Motor neuron (in vitro differentiated cells): ENCODE measurements at regions of chr3 and their contacts with region 1.

Region 1: DNA sequence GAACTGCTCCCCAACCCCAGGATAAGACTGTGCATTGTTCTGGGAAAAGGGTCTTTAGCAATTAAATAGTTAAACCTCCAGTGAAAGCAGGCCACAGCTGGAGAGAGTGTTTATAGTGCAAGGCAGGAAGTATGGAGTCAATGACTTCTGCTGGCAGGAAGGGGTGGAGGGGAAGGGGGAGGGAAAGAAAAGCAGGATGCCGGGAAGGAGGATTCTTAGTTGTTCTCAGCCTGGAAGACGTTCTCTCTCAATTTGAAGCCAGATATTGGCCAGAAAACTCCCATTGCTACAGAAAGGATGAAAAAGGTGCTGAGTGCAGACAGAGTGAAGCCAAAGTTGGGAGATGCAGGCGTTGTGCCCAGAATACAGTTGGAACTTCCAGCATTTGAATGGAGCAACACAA is 35.7 kb upstream of the ACTL6A start:
- ATAC-seq: peak; percentile 66 to 97 (median 78)
- H3K4me3 ChIP-seq: no peak overlapping the region
- H3K27ac ChIP-seq: no peak overlapping the region
- H3K4me1 ChIP-seq: peaks cover 13 to 15% of the 10 kb centered on the region in 2 donors

Region 2: DNA sequence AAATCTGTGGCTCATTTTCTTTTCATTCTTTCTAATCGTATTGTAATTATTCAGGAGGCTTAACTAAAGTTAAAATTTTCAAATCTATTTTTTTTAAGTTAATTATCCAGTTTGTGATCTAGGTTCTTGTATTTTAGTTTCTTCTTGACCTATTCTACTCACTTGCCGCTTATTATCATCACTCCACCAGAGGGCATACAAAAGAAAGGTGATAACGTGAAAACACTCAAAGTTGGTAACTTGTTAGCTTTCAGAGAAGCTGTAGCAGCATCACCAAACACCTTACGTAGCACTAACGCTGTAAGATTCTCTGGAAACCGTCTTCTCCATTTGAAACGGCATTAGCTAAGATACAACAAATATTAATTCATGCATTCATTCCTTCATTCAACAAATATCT is 80.5 kb before region 1 on chr3:
- in situ Hi-C with region 1: loop called in 1 of 9 experiments (anchors 25 kb)
- ATAC-seq: no peak
- H3K4me3 ChIP-seq: no peak overlapping the region
- H3K27ac ChIP-seq: no peak overlapping the region
- H3K4me1 ChIP-seq: peaks cover 0 to 4% of the 10 kb centered on the region in 2 donors

Region 3: DNA sequence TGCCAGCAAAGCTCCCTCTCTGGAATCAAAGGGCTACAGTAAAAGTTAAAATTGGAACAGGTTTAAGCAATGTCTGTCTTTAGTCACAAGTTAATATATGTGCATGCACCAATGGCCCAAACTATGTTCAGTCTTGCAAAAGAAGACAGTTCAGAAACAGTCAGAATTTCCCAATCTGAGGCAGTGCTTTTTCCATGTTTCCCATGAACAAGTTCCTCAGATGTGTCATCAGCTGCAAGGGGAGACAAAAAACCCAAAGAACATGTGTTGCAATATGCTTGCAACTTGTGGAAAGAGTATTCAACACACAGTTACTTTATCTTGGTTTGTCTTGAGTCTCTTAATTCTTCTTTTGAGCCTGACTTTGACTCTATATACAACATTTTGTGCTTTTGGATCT is 274.3 kb after region 1 on chr3:
- in situ Hi-C with region 1: no loop called
- ATAC-seq: peak in 3 of 8 experiments; percentile 24 to 99 (median 98)
- H3K4me3 ChIP-seq: no peak overlapping the region
- H3K27ac ChIP-seq: no peak overlapping the region
- H3K4me1 ChIP-seq: no peaks in the 10 kb centered on the region